GM10248 (cell line): ENCODE measurements at regions of chr3 and their contacts with region 1.

Region 1: GRCh38 chr3:134473868-134474546 is 11.8 kb downstream of the ANAPC13 start:
- DNase-seq: peak; percentile 50
- CTCF ChIP-seq: peak; percentile 49

Region 2: DNA sequence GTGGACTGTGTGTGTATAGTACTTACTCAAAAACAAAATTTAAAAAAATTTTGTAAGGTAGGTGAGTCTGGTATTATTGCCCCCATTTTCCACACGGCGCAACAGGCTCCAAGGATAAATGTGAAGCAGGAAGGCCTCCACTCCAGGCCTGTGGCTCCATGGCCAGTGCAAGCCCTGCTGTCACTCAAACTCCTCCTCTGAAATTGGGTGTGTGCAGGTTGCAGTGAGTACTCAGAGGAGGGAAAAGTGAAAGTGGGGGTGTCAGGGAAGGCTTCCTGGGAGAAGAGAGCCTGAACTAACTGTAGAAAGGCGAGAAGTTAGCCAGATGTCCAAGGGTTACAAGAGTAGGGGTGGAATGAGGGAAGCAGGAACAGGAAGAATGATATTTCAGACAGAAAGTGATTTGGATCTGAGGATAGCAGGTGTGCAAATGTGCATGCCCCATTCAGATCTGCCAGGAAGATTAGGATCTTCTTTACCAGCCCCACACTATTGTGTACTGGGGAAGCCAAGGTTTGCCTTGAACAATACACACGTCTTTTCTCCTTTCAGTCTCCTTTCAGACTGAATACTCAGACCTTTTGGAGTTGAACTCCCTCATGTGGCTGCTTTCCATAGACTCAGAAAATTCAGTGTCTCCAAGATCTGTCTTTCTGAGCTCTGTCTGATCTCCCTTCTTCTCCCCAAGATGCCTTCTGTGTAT is 174.7 kb before region 1 on chr3:
- CTCF ChIA-PET with region 1: interaction called, 45 read pairs
- POLR2A ChIA-PET with region 1: no interaction called
- DNase-seq: no peak
- CTCF ChIP-seq: peak; percentile 22

Region 3: GRCh38 chr3:134308350-134308891 is 165.6 kb before region 1 on chr3:
- CTCF ChIA-PET with region 1: interaction called, 154 read pairs
- POLR2A ChIA-PET with region 1: no interaction called
- DNase-seq: peak; percentile 75
- CTCF ChIP-seq: peak; percentile 97

Region 4: DNA sequence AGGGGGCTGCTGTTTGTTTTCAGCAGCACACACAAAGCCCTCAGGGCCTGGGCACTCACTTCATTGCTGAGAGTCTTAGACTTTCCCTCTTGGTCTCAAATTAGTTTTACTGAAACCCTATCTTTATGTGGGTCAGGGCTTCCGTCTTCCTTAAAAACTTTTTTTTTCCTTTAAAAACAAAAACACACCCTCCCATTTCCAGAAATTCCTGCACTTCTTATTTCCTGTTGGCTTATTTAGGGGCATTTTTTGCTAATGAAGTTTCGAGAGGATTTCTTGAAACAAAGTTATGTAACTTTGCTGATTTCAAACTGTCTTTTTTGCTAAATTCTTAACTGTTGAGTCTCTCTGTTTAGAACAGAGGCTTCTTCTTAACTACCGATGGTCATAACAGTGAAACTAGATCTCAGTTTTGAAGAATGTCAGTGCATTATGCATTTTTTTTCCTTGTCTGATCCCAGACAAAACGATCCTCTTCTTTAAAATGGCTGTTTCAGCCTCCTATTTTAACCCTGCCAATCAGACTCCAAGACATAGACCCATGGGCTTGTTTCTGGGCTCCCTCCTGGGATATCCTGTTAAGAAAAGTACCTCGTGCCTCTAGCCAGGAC is 11.6 kb before region 1 on chr3:
- CTCF ChIA-PET with region 1: interaction called, 15 read pairs
- POLR2A ChIA-PET with region 1: no interaction called
- DNase-seq: no peak
- CTCF ChIP-seq: no peak

Region 5: DNA sequence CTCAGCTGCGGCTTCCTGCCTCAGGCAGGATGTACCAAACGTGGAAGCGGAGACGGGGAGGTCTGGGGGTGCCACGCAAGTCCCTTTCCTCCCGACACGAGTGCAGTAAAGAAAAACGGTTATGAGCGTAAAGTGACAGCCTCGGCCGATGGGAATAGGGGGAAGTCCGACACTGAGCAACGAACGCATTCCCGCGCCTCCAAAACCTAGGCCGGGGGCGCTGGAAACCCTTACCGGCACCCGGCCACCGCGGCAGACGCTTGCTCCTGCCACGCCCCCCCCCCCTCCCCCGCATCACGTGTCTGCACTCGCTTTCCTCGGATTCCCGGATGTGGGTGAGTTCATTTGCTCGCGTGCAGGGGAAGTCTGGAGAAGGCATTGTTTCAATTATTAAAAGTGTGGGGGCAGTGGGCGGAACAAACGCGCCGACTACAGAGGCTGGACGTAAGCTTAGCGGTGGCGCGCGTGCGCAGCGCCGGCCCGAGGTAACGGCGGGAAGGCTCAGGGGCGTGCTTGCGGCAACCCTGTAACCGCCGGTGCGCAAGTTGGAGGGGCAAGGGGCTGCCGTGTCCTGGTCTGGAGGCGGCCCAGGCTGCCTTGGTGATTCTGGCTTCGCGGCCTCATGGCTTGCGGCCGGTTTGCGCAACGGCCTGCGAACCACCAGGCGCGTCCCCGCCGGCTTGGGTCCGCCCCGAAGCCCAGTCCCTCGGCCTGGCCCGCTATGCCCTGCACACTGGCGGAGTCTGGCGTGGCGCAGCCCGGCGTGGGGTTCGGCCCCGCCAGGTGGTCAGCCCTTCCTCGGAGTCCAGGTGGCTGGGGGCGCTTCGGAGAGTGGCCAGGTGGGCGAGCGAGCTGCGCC is 11.9 kb after region 1 on chr3 and contains the starts of genes ANAPC13 and CEP63:
- CTCF ChIA-PET with region 1: interaction called, 96 read pairs
- POLR2A ChIA-PET with region 1: no interaction called
- DNase-seq: peak; percentile 93
- CTCF ChIP-seq: no peak

Region 6: DNA sequence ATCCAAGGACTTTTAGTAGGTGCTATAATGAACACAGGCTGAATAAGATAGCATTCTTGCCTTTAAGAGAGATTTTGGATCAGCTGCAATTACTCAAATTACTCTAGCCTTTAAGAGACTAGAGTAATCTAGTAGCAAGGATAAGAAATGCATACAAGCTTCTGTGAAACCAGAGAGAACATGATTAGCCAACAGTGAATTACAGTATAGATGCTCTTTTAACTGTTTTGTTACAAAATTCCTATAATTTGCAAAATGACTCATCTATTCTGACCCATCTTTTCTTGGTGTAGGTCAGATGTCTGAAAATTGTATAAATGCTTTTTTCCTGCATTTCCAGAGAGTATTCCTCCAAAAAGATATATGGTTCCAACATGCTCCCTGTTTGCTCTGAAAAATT is 78.8 kb after region 1 on chr3:
- CTCF ChIA-PET with region 1: no interaction called
- POLR2A ChIA-PET with region 1: no interaction called
- DNase-seq: no peak
- CTCF ChIP-seq: no peak